Sigmoid colon (tissue), 7 donors: ENCODE measurements at regions of chr10 and their contacts with region 1.

Region 1: DNA sequence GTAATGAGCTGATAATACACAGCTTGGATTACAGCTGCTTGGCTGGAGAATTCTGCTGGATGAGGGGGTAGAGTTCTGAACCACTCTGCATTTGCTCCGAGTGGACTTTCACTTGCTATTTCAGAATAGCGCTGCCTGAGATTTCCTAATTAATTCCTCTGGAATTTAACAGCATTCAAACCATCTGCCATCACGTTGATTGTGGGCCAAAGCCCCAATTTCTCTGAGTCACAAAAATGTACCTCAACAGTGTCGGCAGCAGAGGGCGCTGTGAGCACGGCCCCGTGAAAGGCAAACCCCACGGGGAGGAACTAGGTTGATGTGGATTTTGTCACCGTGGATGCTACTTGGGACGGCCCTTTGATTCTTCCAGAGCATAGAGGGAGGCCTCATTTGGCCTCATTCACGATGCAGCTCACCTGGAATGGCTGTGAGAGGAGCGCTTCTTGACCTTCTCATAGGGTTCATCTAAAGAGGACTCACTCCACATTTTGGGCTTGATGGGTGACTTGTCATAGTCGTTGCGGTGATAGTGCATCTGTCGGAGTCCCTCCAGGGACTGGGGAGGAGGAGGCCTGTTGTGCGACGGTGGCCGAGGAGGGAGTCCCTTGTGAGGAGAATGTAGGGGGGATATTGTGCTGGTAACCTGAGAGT is 73.3 kb downstream of the PRPF18 start:
- DNase-seq: peak; percentile 85
- H3K4me3 ChIP-seq: no peak overlapping the region
- H3K27ac ChIP-seq: peak overlapping the region; percentile 45 to 73 (median 61)
- H3K4me1 ChIP-seq: peaks cover 0 to 36% (median 17%) of the 10 kb centered on the region in 4 donors
- H3K27me3 ChIP-seq: no peaks in the 10 kb centered on the region
- CTCF ChIP-seq: peak; percentile 86 to 90 (median 88)
- EP300 ChIP-seq: no peak
- POLR2A ChIP-seq: no peak

Region 2: DNA sequence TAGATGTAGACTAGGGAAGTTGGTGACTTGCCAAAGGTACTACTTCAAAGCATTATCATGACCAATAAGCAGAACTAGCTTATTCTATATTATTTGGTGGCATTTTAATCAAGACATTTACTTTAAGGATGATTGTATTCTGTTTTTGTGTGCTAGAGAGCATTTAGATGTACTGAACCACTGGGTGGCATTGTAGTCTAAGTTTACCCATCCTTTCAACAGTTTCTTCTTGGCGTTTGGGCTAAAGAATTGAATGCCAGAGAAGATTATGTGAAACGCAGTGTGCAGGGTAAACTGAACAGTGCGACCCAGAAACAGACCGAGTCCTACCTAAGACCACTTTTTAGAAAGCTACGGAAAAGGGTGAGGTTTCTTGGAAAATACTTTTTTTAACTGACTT is 46.5 kb before region 1 on chr10:
- intact Hi-C with region 1: loop called (anchors 5 kb)
- DNase-seq: no peak
- H3K4me3 ChIP-seq: no peak overlapping the region
- H3K27ac ChIP-seq: no peak overlapping the region
- H3K4me1 ChIP-seq: peaks cover 0 to 18% (median 13%) of the 10 kb centered on the region in 4 donors
- H3K27me3 ChIP-seq: no peaks in the 10 kb centered on the region
- CTCF ChIP-seq: peak in 3 of 4 experiments; percentile 12 to 22 (median 21)
- EP300 ChIP-seq: no peak
- POLR2A ChIP-seq: no peak

Region 3: GRCh38 chr10:13708256-13708990 is 48.4 kb after region 1 on chr10:
- intact Hi-C with region 1: loop called (anchors 2 kb)
- DNase-seq: no peak
- H3K4me3 ChIP-seq: peak overlapping the region in 3 of 4 donors; percentile 53 to 61 (median 57)
- H3K27ac ChIP-seq: peak overlapping the region; percentile 69 to 72 (median 72)
- H3K4me1 ChIP-seq: peaks cover 0 to 60% (median 52%) of the 10 kb centered on the region in 4 donors
- H3K27me3 ChIP-seq: no peaks in the 10 kb centered on the region
- CTCF ChIP-seq: no peak
- EP300 ChIP-seq: no peak
- POLR2A ChIP-seq: no peak